ENCODE measurements at regions of chr4 and their contacts with region 1.

Region 1: GRCh38 chr4:83639849-83640493 is 104.1 kb downstream of the GPAT3 start:
- DNase-seq: peak; percentile 42
- ATAC-seq: peak; percentile 89
- H3K4me3 ChIP-seq: no peak overlapping the region
- H3K27ac ChIP-seq: no peak overlapping the region
- H3K4me1 ChIP-seq: no peaks in the 10 kb centered on the region
- H3K27me3 ChIP-seq: peaks cover 0 to 1% of the 10 kb centered on the region in 2 experiments; a peak in 1 of 4 replicates
- CTCF ChIP-seq: peak; percentile 67 to 90 (median 80)
- EP300 ChIP-seq: no peak
- POLR2A ChIP-seq: no peak
- RAD21 ChIP-seq: peak; percentile 89

Region 2: DNA sequence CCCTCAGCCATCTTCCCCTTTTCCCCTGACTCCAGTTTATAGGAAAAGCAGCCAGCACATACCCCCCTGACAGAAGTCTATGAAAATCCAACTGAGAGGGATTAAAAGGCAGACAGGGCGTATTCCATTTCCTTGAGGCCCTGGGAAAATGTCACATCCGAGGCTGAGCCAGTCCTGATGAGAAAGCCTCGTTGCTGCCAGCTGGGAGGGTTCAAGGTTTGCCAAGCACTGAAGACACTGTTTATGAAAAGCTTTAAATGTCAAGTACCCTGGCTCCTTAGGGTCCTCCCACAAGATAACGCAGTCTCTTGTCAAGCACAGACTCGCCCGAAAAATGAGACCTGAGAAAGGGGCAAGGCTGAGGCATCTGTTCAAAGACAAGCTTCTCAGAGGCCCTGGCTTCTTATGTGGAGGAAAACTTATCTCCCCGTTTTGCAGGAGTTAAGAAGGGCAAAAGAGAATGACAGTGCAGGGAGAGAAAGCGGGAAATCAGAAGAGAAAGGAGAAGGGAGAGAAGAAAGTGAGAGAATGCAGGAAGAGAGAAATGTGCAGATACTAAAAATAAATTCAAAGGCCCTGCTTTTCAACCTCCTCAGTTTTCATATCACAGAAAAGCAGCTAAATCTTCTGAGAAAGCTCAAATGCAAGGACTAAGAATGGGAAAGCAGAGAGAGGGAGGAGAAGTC is 886.1 kb before region 1 on chr4:
- CTCF ChIA-PET with region 1: no interaction called
- POLR2A ChIA-PET with region 1: no interaction called
- RAD21 ChIA-PET with region 1: no interaction called
- SMC1A ChIA-PET with region 1: no interaction called
- in situ Hi-C with region 1: no loop called
- intact Hi-C with region 1: no loop called
- DNase-seq: no peak
- ATAC-seq: no peak
- H3K4me3 ChIP-seq: no peak overlapping the region
- H3K27ac ChIP-seq: no peak overlapping the region
- H3K4me1 ChIP-seq: peaks cover 10% of the 10 kb centered on the region
- H3K27me3 ChIP-seq: no peaks in the 10 kb centered on the region
- CTCF ChIP-seq: no peak
- EP300 ChIP-seq: no peak
- POLR2A ChIP-seq: no peak
- RAD21 ChIP-seq: no peak

Region 3: DNA sequence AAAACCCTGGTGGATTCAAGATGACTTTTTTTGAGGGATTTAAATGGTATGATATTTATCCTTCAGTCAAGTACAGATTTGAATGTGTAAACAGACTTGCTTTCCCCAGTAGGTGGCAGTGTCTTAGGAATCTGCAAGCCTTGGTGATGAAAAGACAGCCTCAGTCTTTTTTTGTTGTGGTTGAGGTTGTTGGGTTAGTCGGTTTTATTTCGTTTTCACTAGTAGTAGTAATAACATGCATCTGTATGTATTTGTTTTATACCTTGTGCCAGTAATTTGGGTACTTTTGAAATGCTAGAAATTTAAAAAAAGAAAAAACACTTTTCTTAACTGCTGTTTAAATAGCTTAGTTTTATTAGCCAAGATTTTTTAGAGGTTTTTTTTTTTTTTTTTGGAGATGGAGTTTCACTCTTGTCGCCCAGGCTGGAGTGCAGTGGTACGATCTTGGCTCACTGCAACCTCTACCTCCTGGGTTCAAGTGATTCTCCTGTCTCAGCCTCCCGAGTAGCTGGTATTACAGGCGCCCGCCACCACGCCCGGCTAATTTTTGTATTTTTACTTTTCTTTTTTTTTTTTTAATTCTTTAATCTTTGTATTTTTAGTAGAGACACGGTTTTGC is 565.8 kb before region 1 on chr4:
- CTCF ChIA-PET with region 1: no interaction called
- POLR2A ChIA-PET with region 1: no interaction called
- RAD21 ChIA-PET with region 1: no interaction called
- SMC1A ChIA-PET with region 1: no interaction called
- in situ Hi-C with region 1: loop called (anchors 25 kb)
- intact Hi-C with region 1: no loop called
- DNase-seq: peak; percentile 79
- ATAC-seq: peak; percentile 95
- H3K4me3 ChIP-seq: no peak overlapping the region
- H3K27ac ChIP-seq: peak overlapping the region; percentile 7; the same call in 1 of the 2 replicates
- H3K4me1 ChIP-seq: peaks cover 8% of the 10 kb centered on the region
- H3K27me3 ChIP-seq: no peaks in the 10 kb centered on the region
- CTCF ChIP-seq: peak; percentile 74 to 78 (median 77)
- EP300 ChIP-seq: 0 out of 4 replicates have a peak, but pooled peaks of 1 of the 2 experiments have one; percentile 31
- POLR2A ChIP-seq: no peak
- RAD21 ChIP-seq: peak; percentile 92

Region 4: DNA sequence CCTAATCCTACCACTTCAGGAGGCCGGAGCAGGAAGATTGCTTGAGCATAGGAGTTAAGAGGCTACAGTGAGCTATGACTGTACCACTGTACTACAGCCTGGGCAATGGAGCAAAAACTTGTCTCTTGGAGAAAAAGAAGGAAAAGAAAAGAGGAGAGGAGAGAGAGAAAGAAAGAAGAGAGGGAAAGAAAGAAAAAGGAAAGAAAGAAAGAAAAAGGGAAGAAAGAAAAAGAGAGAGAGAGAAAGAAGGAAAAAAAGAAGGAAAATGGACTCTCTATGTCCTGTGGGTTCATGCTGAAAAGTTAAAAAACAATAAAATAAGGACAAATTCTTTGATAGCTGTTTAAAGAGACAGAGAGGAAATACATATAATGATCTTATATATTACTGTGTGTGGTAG is 141.8 kb before region 1 on chr4:
- CTCF ChIA-PET with region 1: interaction called, 16 read pairs
- POLR2A ChIA-PET with region 1: no interaction called
- RAD21 ChIA-PET with region 1: interaction called, 3 read pairs
- SMC1A ChIA-PET with region 1: no interaction called
- in situ Hi-C with region 1: no loop called
- intact Hi-C with region 1: no loop called
- DNase-seq: no peak
- ATAC-seq: no peak
- H3K4me3 ChIP-seq: no peak overlapping the region
- H3K27ac ChIP-seq: no peak overlapping the region
- H3K4me1 ChIP-seq: no peaks in the 10 kb centered on the region
- H3K27me3 ChIP-seq: no peaks in the 10 kb centered on the region
- CTCF ChIP-seq: no peak
- EP300 ChIP-seq: no peak
- POLR2A ChIP-seq: no peak
- RAD21 ChIP-seq: no peak

Region 5: DNA sequence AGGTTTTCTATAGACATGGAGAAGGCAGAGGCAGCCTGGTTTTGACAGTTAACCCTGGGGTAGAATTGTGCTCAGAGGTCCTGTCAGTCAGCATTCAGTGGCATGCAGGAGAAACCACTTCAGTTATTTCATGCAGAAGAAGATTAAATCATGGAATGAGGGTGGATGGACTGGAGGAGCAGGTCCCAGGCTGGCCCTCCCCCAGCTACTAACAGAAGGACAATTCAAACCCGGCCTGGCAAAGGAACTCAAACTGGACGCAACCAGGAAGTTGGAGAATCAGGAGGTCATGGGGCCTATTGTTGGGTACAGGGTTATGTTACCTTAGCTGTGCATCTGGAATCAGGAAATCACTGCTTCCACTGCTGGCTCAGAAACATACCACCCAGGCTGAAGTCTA is 17.3 kb after region 1 on chr4:
- CTCF ChIA-PET with region 1: interaction called, 32 read pairs
- POLR2A ChIA-PET with region 1: no interaction called
- RAD21 ChIA-PET with region 1: no interaction called
- SMC1A ChIA-PET with region 1: interaction called, 3 read pairs
- in situ Hi-C with region 1: no loop called
- intact Hi-C with region 1: no loop called
- DNase-seq: no peak
- ATAC-seq: no peak
- H3K4me3 ChIP-seq: no peak overlapping the region
- H3K27ac ChIP-seq: no peak overlapping the region
- H3K4me1 ChIP-seq: no peaks in the 10 kb centered on the region
- H3K27me3 ChIP-seq: no peaks in the 10 kb centered on the region
- CTCF ChIP-seq: no peak
- EP300 ChIP-seq: no peak
- POLR2A ChIP-seq: no peak
- RAD21 ChIP-seq: no peak

Region 6: DNA sequence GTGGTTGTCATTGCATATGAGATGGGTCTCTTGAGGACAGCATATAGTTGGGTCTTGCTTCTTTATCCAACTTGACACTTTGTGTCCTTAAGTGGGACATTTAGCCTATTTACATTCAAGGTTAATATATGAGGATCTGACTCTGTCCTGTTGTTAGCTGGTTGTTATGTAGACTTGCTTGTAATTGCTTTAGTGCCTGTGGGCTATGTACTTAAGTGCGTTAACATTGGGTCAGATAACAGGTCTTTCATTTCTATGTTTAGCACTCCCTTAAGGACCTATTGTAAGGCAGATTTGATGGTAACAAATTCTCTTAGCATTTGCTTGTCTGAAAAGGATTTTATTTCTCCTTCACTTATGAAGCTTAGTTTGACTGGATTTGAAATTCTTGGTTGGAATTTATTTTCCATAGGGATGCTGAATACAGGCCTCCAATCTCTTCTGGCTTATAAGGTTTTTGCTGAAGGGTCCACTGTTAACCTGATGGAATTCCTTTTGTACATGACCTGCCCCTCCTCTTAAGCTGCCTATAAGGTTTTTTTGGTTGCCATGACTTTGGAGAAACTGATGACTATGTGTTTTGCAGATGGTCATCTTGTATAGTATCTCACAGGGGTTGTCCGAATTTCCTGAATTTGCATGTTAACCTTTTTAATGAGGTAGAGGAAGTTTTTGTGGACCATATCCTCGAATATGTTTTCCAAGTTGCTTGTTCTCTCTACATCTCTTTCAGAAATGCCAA is 697.2 kb after region 1 on chr4:
- CTCF ChIA-PET with region 1: no interaction called
- POLR2A ChIA-PET with region 1: no interaction called
- RAD21 ChIA-PET with region 1: no interaction called
- SMC1A ChIA-PET with region 1: no interaction called
- in situ Hi-C with region 1: no loop called
- intact Hi-C with region 1: no loop called
- DNase-seq: no peak
- ATAC-seq: no peak
- H3K4me3 ChIP-seq: no peak overlapping the region
- H3K27ac ChIP-seq: no peak overlapping the region
- H3K4me1 ChIP-seq: no peaks in the 10 kb centered on the region
- H3K27me3 ChIP-seq: no peaks in the 10 kb centered on the region
- CTCF ChIP-seq: no peak
- EP300 ChIP-seq: no peak
- POLR2A ChIP-seq: no peak
- RAD21 ChIP-seq: no peak

Region 7: DNA sequence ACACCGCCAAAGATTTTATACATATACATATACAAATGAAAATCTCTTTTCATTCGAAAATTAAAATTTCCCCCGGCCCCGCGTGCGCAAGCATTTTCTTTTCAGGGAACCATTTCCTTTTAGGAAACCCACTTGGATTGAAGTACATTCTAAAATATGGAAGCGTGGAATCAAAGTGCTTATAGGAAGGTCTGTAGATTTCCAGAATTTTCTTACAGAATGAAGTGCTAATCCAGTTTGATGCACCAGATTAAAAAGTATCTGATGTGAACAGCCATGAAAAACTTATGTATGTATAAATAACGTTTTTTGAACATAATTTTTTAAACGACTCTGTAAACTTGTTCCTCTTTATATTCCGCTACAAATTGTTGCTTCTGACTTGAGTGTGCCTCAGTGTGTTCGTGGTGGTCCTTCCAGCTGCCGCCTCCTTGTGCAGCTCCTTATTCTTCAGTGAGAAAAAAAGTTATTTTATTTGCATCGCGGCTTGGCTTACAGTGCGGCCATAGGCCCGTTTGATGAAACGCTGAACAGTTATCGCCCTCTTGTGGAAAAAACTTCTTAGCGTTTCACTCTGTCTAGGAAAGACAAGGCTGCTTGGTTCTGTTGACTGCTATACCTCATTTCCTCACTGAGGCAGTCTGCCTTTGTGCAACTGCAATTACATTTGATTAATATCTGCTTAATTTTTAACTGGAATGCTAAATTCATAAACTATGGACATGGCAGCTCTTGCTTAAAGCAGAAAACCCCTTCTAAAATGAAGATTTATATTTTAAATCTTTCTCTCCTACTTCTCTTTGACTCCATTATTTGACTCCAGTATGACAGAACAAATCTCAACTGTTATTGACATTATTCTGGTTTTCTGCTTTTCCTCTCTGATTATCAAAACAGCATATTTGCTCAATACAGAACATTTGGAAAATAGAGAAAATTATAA is 863.8 kb after region 1 on chr4:
- CTCF ChIA-PET with region 1: interaction called, 8 read pairs
- POLR2A ChIA-PET with region 1: no interaction called
- RAD21 ChIA-PET with region 1: no interaction called
- SMC1A ChIA-PET with region 1: no interaction called
- in situ Hi-C with region 1: no loop called
- intact Hi-C with region 1: loop called (anchors 1 kb)
- DNase-seq: no peak
- ATAC-seq: peak; percentile 95
- H3K4me3 ChIP-seq: no peak overlapping the region
- H3K27ac ChIP-seq: no peak overlapping the region
- H3K4me1 ChIP-seq: no peaks in the 10 kb centered on the region
- H3K27me3 ChIP-seq: peaks cover 7 to 10% of the 10 kb centered on the region in 2 experiments
- CTCF ChIP-seq: peak; percentile 54 to 67 (median 57); a peak in 5 of 6 replicates
- EP300 ChIP-seq: no peak
- POLR2A ChIP-seq: no peak
- RAD21 ChIP-seq: peak; percentile 82

Measured in GM12878 (cell line).